Naive thymus-derived CD4-positive, alpha-beta T cell (primary cell): ENCODE measurements at regions of chr1 and their contacts with region 1.

Region 1: DNA sequence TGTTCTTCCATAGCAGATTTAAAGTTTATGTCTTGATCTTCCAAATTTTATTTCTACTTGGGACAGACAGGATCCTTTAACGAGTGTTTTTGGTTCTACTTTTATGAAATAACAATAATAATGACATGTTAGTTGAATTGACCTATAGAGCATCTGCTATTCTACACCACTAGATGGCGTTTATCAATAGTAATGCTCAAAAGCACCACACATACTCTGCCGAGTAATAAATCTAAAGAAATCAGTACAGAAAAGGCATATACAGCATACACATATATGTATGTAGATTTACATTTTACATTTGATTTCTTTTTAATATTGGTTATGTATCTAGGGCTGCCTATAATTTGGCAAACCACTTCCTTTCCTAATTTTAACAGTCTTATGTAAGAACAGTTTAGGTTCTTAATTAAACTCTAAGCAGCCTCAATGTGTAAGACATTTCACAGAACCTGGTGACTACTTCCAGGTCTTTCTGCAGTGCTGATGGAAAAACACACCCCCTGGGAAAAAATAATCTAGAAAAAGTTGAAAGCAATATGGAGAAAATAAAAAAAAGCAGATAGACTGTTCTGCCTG is 5.9 kb upstream of the SIPA1L2 start:
- DNase-seq: peak in 6 of 9 donors; percentile 12 to 57 (median 38)
- ATAC-seq: peak; percentile 83
- H3K4me3 ChIP-seq: no peak overlapping the region
- H3K4me3 Mint-ChIP-seq: no peak overlapping the region
- H3K27ac ChIP-seq: no peak overlapping the region
- H3K27ac Mint-ChIP-seq: no peak overlapping the region
- H3K4me1 ChIP-seq: peaks cover 2 to 3% of the 10 kb centered on the region in 2 donors
- H3K4me1 Mint-ChIP-seq: peaks cover under 1 to 5% (median 2%) of the 10 kb centered on the region in 7 donors
- H3K27me3 ChIP-seq: peaks cover 0 to 3% of the 10 kb centered on the region in 2 donors
- H3K27me3 Mint-ChIP-seq: peaks cover 5 to 38% (median 15%) of the 10 kb centered on the region in 5 donors

Region 2: DNA sequence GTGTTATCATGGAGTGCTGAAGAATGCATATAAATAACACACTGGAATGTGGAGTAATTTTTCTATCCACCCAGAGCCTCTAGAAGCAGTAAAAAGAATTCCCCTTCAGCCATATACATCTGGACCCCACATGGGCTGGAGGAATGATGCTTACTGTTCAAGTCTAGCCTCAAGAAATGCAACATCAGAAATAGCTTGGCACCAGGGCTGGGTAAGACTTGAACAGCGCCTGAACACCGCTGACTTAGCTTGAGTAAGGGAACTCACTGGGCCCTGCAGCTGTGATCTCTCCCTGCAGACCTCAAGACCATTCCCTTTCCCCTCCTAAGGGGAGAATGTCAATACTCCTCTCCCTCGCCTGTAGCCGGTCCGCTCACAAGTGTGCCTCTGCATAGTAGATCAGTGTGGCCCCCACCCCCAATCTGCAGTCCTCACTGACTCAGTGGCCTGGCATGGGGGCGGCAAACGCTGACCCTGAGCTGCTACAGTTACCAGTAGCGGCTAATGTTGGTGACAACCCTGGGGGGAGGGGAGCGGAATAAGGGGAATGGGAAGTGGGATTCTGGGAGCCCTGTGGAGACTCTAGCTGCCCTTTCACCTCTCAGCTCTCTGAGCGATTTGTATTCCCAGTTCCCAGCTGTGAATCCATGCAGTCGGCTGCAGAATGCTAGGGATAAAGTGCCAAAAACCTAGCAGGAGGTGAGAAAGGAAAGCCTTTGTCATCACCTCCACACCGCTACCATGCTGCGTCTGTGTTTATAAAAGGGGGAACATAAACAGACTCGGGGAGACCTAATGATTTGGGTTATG is 525.4 kb before region 1 on chr1:
- CTCF ChIA-PET with region 1: no interaction called
- POLR2A ChIA-PET with region 1: no interaction called
- intact Hi-C with region 1: no loop called
- DNase-seq: no peak
- ATAC-seq: no peak
- H3K4me3 ChIP-seq: no peak overlapping the region
- H3K4me3 Mint-ChIP-seq: no peak overlapping the region
- H3K27ac ChIP-seq: no peak overlapping the region
- H3K27ac Mint-ChIP-seq: no peak overlapping the region
- H3K4me1 ChIP-seq: no peaks in the 10 kb centered on the region
- H3K4me1 Mint-ChIP-seq: no peaks in the 10 kb centered on the region
- H3K27me3 ChIP-seq: no peaks in the 10 kb centered on the region
- H3K27me3 Mint-ChIP-seq: peaks cover 6 to 30% (median 21%) of the 10 kb centered on the region in 5 donors

Region 3: GRCh38 chr1:232793944-232794343 is 158.1 kb after region 1 on chr1:
- CTCF ChIA-PET with region 1: interaction called, 3 read pairs
- POLR2A ChIA-PET with region 1: no interaction called
- intact Hi-C with region 1: loop called (anchors 1 kb)
- DNase-seq: peak in 6 of 9 donors; percentile 5 to 53 (median 27)
- ATAC-seq: peak; percentile 41
- H3K4me3 ChIP-seq: no peak overlapping the region
- H3K4me3 Mint-ChIP-seq: peak overlapping the region in 8 of 10 donors; percentile 5 to 66 (median 38)
- H3K27ac ChIP-seq: no peak overlapping the region
- H3K27ac Mint-ChIP-seq: peak overlapping the region in 6 of 9 donors; percentile 11 to 75 (median 32)
- H3K4me1 ChIP-seq: peaks cover 7 to 11% of the 10 kb centered on the region in 2 donors
- H3K4me1 Mint-ChIP-seq: peaks cover 8 to 23% (median 16%) of the 10 kb centered on the region in 7 donors
- H3K27me3 ChIP-seq: no peaks in the 10 kb centered on the region
- H3K27me3 Mint-ChIP-seq: peaks cover 0 to 5% (median 0%) of the 10 kb centered on the region in 5 donors

Region 4: GRCh38 chr1:233025157-233025915 is 389.5 kb after region 1 on chr1:
- CTCF ChIA-PET with region 1: interaction called, 3 read pairs
- POLR2A ChIA-PET with region 1: no interaction called
- intact Hi-C with region 1: loop called (anchors 1 to 2 kb)
- DNase-seq: peak in 4 of 9 donors; percentile 8 to 36 (median 17)
- ATAC-seq: peak; percentile 24
- H3K4me3 ChIP-seq: no peak overlapping the region
- H3K4me3 Mint-ChIP-seq: no peak overlapping the region
- H3K27ac ChIP-seq: no peak overlapping the region
- H3K27ac Mint-ChIP-seq: no peak overlapping the region
- H3K4me1 ChIP-seq: no peaks in the 10 kb centered on the region
- H3K4me1 Mint-ChIP-seq: peaks cover 0 to 5% (median 0%) of the 10 kb centered on the region in 7 donors
- H3K27me3 ChIP-seq: no peaks in the 10 kb centered on the region
- H3K27me3 Mint-ChIP-seq: no peaks in the 10 kb centered on the region

Region 5: DNA sequence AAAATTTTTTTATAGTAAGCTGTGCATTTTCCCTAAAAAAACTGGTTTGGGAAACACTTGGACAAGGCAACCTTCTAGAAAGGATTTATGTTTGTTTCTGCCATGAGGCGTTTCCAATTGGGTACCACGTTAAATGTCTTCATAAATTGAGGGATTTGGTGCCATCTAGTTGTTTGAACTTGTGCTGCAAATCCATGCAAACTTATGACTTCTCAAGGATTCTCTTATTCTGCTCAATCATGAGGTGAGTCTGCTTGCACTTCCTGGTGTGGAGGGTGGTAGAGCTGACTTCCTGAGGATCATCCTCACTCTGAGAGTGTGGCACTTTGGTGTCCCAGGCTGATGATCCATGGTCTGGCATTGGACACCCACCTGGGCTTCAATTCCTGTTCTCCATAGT is 536.4 kb after region 1 on chr1:
- CTCF ChIA-PET with region 1: no interaction called
- POLR2A ChIA-PET with region 1: no interaction called
- intact Hi-C with region 1: loop called in 1 of 2 experiments (anchors 5 kb)
- DNase-seq: no peak
- ATAC-seq: no peak
- H3K4me3 ChIP-seq: no peak overlapping the region
- H3K4me3 Mint-ChIP-seq: no peak overlapping the region
- H3K27ac ChIP-seq: no peak overlapping the region
- H3K27ac Mint-ChIP-seq: no peak overlapping the region
- H3K4me1 ChIP-seq: no peaks in the 10 kb centered on the region
- H3K4me1 Mint-ChIP-seq: no peaks in the 10 kb centered on the region
- H3K27me3 ChIP-seq: no peaks in the 10 kb centered on the region
- H3K27me3 Mint-ChIP-seq: no peaks in the 10 kb centered on the region

Region 6: GRCh38 chr1:233240829-233241682 is 605.2 kb after region 1 on chr1:
- CTCF ChIA-PET with region 1: no interaction called
- POLR2A ChIA-PET with region 1: no interaction called
- intact Hi-C with region 1: loop called in 1 of 2 experiments (anchors 1 kb)
- DNase-seq: peak in 4 of 9 donors; percentile 17 to 33 (median 22)
- ATAC-seq: peak; percentile 69
- H3K4me3 ChIP-seq: no peak overlapping the region
- H3K4me3 Mint-ChIP-seq: no peak overlapping the region
- H3K27ac ChIP-seq: no peak overlapping the region
- H3K27ac Mint-ChIP-seq: no peak overlapping the region
- H3K4me1 ChIP-seq: no peaks in the 10 kb centered on the region
- H3K4me1 Mint-ChIP-seq: peaks cover 0 to 19% (median 0%) of the 10 kb centered on the region in 7 donors
- H3K27me3 ChIP-seq: no peaks in the 10 kb centered on the region
- H3K27me3 Mint-ChIP-seq: no peaks in the 10 kb centered on the region